ENCODE measurements at regions of chr17 and their contacts with region 1.

Region 1: GRCh38 chr17:75632863-75633485 is at the start of gene SMIM5:
- DNase-seq: peak; percentile 75 to 97
- H3K4me3 ChIP-seq: peak within 1 kb of the TSS in 1 of 4 experiments; percentile 16; a peak in 3 of 8 replicates
- H3K27ac ChIP-seq: no peak within 1 kb of the TSS
- H3K4me1 ChIP-seq: peaks cover 0 to 16% (median 11%) of the 10 kb centered on the region in 4 experiments; a peak in 5 of 7 replicates
- H3K27me3 ChIP-seq: no peaks in the 10 kb centered on the region
- CTCF ChIP-seq: peak; percentile 93 to 95 (median 94)
- EP300 ChIP-seq: no peak
- POLR2A ChIP-seq: no peak
- RAD21 ChIP-seq: peak; percentile 58 to 70
- total RNA-seq, gene SMIM5: not detected in 2 replicates

Region 2: DNA sequence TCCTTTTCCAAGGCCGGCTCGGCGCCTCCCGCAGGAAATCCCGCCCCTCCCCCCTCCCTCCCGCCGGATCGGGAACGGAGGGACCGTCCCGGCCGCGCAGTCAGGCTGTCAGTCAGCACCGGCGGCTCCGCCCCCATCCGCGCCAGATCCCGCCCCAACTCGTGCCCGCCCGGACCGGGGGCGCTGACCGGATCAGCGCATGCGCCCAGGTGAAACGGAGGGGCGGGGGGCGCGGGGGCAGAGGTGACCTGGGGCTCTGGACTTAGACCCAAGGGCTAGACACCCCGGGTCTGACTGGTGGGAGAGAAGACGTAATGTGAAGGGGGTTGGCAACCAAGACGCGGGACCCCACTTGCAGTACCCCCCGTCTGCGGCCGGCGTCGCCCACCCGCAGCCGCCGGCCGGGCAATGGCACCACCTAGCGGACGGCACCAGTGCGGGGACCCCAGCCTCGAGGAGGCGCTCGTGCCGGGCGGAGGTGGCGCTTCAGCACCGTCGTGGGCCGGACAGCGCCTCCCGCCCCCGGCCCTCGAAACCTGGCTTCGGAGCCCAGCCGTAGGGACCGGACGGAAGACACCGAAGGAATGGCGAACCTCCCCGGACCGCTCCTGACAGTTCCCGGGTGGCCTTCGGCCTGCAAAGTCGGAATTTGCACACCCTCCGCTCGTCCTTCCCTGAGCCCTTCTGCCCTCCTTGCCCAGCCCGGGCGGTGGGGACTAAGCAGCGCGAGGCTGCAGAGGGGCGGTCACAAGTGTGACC is 117.3 kb before region 1 on chr17 and contains the start of gene CASKIN2:
- CTCF ChIA-PET with region 1: interaction called, 12 read pairs
- POLR2A ChIA-PET with region 1: no interaction called
- DNase-seq: peak; percentile 77 to 99
- H3K4me3 ChIP-seq: peak within 1 kb of the TSS; percentile 79 to 92 (median 82)
- H3K27ac ChIP-seq: peak within 1 kb of the TSS; percentile 59
- H3K4me1 ChIP-seq: peaks cover 0 to 14% (median 8%) of the 10 kb centered on the region in 4 experiments; a peak in 6 of 7 replicates
- H3K27me3 ChIP-seq: no peaks in the 10 kb centered on the region
- CTCF ChIP-seq: peak; percentile 96 to 100 (median 100)
- EP300 ChIP-seq: 0 out of 3 replicates have a peak, but pooled peaks of 1 of the 2 experiments have one; percentile 21
- POLR2A ChIP-seq: no peak
- RAD21 ChIP-seq: peak; percentile 47 to 77
- total RNA-seq, gene CASKIN2: 28.9 and 32.3 TPM in 2 replicates

Region 3: DNA sequence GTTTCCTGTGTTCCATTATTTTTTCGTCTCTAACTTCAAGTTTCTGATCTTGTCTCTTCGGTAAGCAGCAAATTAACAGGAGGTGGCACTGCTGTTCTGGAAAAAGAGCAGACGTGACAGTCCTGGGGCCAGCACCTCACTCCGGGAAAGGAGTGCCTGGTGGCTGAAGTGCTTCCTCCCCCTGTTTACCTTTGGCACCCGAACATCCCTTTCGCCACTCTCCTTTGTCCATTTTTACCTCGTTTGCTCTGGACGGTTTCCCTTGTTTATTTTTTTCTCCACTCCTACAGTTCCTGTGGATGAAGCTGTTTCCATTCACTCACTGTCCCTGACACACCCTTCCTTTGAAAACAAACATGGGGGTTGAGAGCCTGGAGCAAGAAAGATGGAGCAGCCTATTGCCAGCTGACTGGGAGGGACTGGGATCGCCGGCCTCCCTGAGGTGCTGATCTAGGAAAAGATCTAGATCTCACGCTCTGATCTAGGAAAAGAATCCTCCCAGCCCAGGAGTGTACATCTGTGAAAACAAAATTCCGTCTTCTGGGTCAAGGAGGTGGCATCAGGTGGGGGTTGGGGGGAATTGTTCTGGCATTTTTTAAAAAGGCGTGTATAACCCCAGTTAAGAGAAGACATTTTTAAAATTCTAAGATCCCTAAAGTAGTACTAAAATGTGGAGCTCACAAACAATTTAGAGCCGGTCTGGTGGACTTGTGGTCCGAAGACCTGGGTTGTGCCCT is 46.9 kb after region 1 on chr17:
- CTCF ChIA-PET with region 1: interaction called, 15 read pairs
- POLR2A ChIA-PET with region 1: no interaction called
- DNase-seq: no peak
- H3K4me3 ChIP-seq: no peak overlapping the region
- H3K27ac ChIP-seq: no peak overlapping the region
- H3K4me1 ChIP-seq: no peaks in the 10 kb centered on the region
- H3K27me3 ChIP-seq: no peaks in the 10 kb centered on the region
- CTCF ChIP-seq: no peak
- EP300 ChIP-seq: no peak
- POLR2A ChIP-seq: no peak
- RAD21 ChIP-seq: no peak

Region 4: GRCh38 chr17:75720725-75721462 is 87.9 kb after region 1 on chr17 and contains the start of gene ITGB4:
- CTCF ChIA-PET with region 1: interaction called, 20 read pairs
- POLR2A ChIA-PET with region 1: interaction called, 3 read pairs
- DNase-seq: peak; percentile 50 to 84
- H3K4me3 ChIP-seq: peak within 1 kb of the TSS; percentile 49 to 74 (median 50)
- H3K27ac ChIP-seq: no peak within 1 kb of the TSS
- H3K4me1 ChIP-seq: peaks cover 0 to 8% (median 4%) of the 10 kb centered on the region in 4 experiments; a peak in 3 of 7 replicates
- H3K27me3 ChIP-seq: peaks cover 4 to 30% (median 17%) of the 10 kb centered on the region in 4 experiments; a peak in 6 of 7 replicates
- CTCF ChIP-seq: peak in 2 of 3 experiments; percentile 1 to 33; a peak in 2 of 4 replicates
- EP300 ChIP-seq: peak in 1 of 2 experiments; percentile 26; a peak in 1 of 3 replicates
- POLR2A ChIP-seq: peak in 1 of 2 experiments; percentile 43; a peak in 1 of 3 replicates
- RAD21 ChIP-seq: no peak
- total RNA-seq, gene ITGB4: 5.4 and 5.6 TPM in 2 replicates

Region 5: GRCh38 chr17:75738218-75738802 is 105.3 kb after region 1 on chr17:
- CTCF ChIA-PET with region 1: interaction called, 312 read pairs
- POLR2A ChIA-PET with region 1: no interaction called
- DNase-seq: no peak
- H3K4me3 ChIP-seq: no peak overlapping the region
- H3K27ac ChIP-seq: no peak overlapping the region
- H3K4me1 ChIP-seq: no peaks in the 10 kb centered on the region
- H3K27me3 ChIP-seq: no peaks in the 10 kb centered on the region
- CTCF ChIP-seq: no peak
- EP300 ChIP-seq: no peak
- POLR2A ChIP-seq: no peak
- RAD21 ChIP-seq: no peak

Region 6: DNA sequence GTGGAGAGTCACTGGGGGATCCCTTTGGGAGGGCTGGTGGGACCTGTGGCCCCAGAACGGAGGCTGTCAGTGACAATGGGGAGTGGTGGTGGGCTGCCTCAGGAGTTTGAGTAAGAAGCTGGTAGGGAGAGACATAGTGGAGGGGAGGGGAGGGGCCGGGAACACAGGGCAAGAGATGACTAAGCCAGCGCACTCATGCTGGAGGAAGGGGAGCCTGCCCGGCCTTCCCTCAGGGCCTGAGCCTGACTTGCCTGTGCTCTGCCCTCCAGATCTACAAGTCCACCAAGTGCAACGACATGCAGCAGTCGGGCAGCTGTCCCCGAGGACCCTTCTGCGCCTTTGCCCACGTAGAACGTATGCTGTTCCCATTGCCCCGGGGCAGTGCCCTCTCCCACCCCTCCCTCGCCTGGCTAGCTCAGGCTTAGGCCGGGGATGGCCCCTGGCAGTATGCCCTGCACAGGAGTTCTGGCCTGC is 182.0 kb after region 1 on chr17:
- CTCF ChIA-PET with region 1: no interaction called
- POLR2A ChIA-PET with region 1: no interaction called
- DNase-seq: no peak
- H3K4me3 ChIP-seq: no peak overlapping the region
- H3K27ac ChIP-seq: no peak overlapping the region
- H3K4me1 ChIP-seq: no peaks in the 10 kb centered on the region
- H3K27me3 ChIP-seq: no peaks in the 10 kb centered on the region
- CTCF ChIP-seq: no peak
- EP300 ChIP-seq: no peak
- POLR2A ChIP-seq: no peak
- RAD21 ChIP-seq: no peak

Measured in H1 (cell line).